ENCODE measurements at regions of chr11 and their contacts with region 1.

Region 1: GRCh38 chr11:90284171-90284570 is 61.3 kb upstream of the CHORDC1 start:
- DNase-seq: no peak
- ATAC-seq: no peak
- H3K4me3 ChIP-seq: no peak overlapping the region
- H3K4me3 Mint-ChIP-seq: no peak overlapping the region
- H3K27ac ChIP-seq: no peak overlapping the region
- H3K27ac Mint-ChIP-seq: no peak overlapping the region
- H3K4me1 ChIP-seq: no peaks in the 10 kb centered on the region
- H3K4me1 Mint-ChIP-seq: no peaks in the 10 kb centered on the region
- H3K27me3 ChIP-seq: no peaks in the 10 kb centered on the region
- H3K27me3 Mint-ChIP-seq: peaks cover 4 to 9% of the 10 kb centered on the region in 2 donors

Region 2: DNA sequence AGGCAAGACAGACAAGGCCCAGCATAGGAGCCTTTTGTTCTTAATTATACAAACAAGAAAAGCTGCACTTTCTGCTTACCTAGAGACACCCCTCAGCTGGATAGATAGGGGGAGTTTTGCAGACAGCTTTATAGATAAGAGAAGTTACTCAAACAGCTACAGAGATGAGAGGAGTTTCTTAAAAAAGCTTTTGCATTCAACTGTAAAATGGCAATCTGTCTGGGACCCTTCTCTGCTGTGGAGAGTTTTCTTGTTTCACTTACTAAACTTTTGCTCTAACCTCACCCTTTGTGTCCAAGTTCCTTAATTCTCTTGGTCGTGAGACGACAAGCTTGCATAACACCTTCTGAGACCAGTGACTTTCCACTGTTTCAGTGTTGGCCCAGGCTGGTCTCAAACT is 42.5 kb after region 1 on chr11:
- CTCF ChIA-PET with region 1: no interaction called
- POLR2A ChIA-PET with region 1: no interaction called
- DNase-seq: no peak
- ATAC-seq: no peak
- H3K4me3 ChIP-seq: no peak overlapping the region
- H3K4me3 Mint-ChIP-seq: no peak overlapping the region
- H3K27ac ChIP-seq: no peak overlapping the region
- H3K27ac Mint-ChIP-seq: no peak overlapping the region
- H3K4me1 ChIP-seq: no peaks in the 10 kb centered on the region
- H3K4me1 Mint-ChIP-seq: no peaks in the 10 kb centered on the region
- H3K27me3 ChIP-seq: no peaks in the 10 kb centered on the region
- H3K27me3 Mint-ChIP-seq: peaks cover 0 to 14% of the 10 kb centered on the region in 2 donors

Region 3: DNA sequence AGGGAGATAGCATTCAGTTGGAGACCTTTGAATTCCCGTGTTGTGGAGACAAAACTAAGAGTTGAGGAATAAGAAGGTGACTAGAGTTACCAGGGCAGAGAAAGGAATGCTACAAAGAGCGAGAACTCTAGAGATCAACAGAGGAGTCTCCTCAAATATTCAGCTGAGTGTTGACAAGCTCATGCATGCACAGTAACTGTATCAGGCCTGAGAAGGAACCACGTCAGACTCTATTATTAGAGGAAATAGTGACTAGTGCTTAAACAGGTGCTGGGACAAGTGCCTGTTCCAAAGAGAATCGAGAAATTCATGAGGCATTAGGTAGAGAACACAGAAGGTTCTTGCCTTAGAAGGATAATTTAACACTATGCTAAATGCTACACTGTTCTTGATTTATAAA is 272.4 kb after region 1 on chr11:
- CTCF ChIA-PET with region 1: interaction called in 1 of 2 experiments, 11 read pairs
- POLR2A ChIA-PET with region 1: no interaction called
- DNase-seq: no peak
- ATAC-seq: no peak
- H3K4me3 ChIP-seq: no peak overlapping the region
- H3K4me3 Mint-ChIP-seq: no peak overlapping the region
- H3K27ac ChIP-seq: no peak overlapping the region
- H3K27ac Mint-ChIP-seq: no peak overlapping the region
- H3K4me1 ChIP-seq: no peaks in the 10 kb centered on the region
- H3K4me1 Mint-ChIP-seq: no peaks in the 10 kb centered on the region
- H3K27me3 ChIP-seq: no peaks in the 10 kb centered on the region
- H3K27me3 Mint-ChIP-seq: no peaks in the 10 kb centered on the region

Measured in T-cell (primary cell).